Activated CD4-positive, alpha-beta T cell treated with anti-CD3 and anti-CD28 coated beads, Interleukin-2, amount 10 ng/mL, durations not matched to agents 7 days and 5 days (primary cell): ENCODE measurements at regions of chr12 and their contacts with region 1.

Region 1: DNA sequence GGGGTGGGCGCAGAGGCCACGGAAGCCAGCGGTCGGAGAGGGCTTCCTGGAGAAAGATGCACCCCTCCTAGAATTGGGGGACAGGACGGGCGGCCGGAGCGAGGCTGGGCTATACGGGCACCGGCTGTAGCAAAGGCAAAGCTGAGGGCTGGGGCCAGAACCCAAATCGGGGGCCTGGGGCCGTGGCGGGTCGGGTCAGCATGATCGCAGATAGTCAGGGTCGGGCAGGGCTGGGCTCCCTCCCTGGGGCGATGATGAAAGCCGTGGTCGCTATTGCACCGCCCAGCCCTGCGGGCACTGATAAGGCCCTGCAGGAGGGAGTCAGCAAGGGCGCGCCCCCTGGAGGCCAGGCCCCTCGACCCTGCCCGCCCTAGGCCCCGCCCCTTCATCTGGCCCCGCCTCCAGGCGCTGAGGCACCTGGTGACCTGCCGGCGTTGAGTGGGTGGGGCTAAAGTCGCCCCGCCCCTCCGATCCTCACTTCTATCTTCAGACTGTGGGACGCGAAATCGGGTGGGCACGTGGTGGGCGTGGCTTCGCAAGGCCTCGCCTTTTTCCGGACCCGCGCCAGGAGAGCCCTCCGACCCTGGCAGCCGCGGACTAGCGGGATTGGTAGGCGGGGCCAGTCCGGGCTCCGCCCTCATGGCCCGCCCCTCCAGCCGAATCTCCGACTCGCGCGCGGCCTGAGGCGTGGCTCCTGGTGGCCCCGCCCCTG is 418 bp upstream of the SH2B3 start:
- DNase-seq: peak; percentile 98
- H3K4me3 Mint-ChIP-seq: peak overlapping the region; percentile 75
- H3K27ac Mint-ChIP-seq: peak overlapping the region; percentile 85
- H3K4me1 Mint-ChIP-seq: peaks cover 55% of the 10 kb centered on the region
- H3K27me3 Mint-ChIP-seq: no peaks in the 10 kb centered on the region

Region 2: GRCh38 chr12:111424793-111425251 is 19.5 kb after region 1 on chr12:
- CTCF ChIA-PET with region 1: interaction called, 14 read pairs
- POLR2A ChIA-PET with region 1: interaction called, 4 read pairs
- DNase-seq: no peak
- H3K4me3 Mint-ChIP-seq: no peak overlapping the region
- H3K27ac Mint-ChIP-seq: peak overlapping the region; percentile 68
- H3K4me1 Mint-ChIP-seq: peaks cover 68% of the 10 kb centered on the region
- H3K27me3 Mint-ChIP-seq: no peaks in the 10 kb centered on the region

Region 3: GRCh38 chr12:111434680-111435338 is 29.5 kb after region 1 on chr12:
- CTCF ChIA-PET with region 1: interaction called, 14 read pairs
- POLR2A ChIA-PET with region 1: interaction called, 4 read pairs
- DNase-seq: peak; percentile 88
- H3K4me3 Mint-ChIP-seq: peak overlapping the region; percentile 64
- H3K27ac Mint-ChIP-seq: peak overlapping the region; percentile 98
- H3K4me1 Mint-ChIP-seq: peaks cover 93% of the 10 kb centered on the region
- H3K27me3 Mint-ChIP-seq: no peaks in the 10 kb centered on the region

Region 4: GRCh38 chr12:111444925-111445725 is 39.8 kb after region 1 on chr12:
- CTCF ChIA-PET with region 1: interaction called, 79 read pairs
- POLR2A ChIA-PET with region 1: interaction called, 7 read pairs
- DNase-seq: peak; percentile 91
- H3K4me3 Mint-ChIP-seq: peak overlapping the region; percentile 35
- H3K27ac Mint-ChIP-seq: peak overlapping the region; percentile 88
- H3K4me1 Mint-ChIP-seq: peaks cover 73% of the 10 kb centered on the region
- H3K27me3 Mint-ChIP-seq: no peaks in the 10 kb centered on the region